Head of caudate nucleus (tissue), 42 donors: ENCODE measurements at regions of chr9 and their contacts with region 1.

Region 1: DNA sequence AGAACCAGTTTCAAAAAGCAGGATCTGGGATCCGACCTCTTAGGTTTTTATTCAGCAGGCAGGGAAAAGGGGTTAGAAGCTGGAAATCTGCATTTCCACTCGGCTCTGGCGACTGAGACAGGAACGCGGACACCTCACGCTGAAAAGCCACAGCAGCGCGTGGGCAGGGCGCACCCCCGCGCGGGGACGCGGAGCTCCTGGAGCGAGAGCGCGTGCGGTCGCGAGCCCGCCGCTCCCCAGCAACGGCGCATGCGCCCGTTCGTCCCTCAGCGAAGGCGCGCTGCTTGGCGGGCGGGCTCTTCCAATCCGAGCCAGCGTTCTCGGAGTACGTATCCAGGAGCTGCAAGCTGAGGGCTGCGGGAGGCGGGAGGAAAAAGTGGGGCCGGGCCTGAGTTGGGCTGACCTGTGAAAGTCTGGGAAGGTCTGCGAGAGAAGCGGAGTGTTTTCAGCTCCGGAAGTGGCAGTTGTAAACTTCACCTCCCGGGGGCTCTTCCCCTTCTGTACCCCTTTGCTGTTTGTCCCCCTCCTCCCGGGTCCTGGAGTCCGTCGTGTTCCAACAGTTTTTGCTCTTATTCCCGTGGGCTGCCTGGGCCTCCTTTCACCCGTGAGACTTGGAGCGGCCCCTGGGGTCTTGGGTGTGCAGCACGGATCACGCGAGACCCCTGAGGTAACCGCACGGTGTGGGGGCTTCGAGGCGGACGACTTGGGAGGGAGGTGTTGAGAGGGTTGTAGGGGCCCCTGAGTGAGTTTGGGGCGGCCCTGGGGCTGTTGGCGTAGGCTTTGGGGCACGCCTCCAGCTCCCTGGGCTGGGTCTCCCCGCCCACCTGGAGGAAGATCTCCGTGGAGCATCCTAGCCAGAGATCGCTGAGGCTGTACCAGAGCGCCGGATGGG is at the start of gene CCDC171:
- DNase-seq: peak; percentile 84 to 97 (median 93)

Region 2: DNA sequence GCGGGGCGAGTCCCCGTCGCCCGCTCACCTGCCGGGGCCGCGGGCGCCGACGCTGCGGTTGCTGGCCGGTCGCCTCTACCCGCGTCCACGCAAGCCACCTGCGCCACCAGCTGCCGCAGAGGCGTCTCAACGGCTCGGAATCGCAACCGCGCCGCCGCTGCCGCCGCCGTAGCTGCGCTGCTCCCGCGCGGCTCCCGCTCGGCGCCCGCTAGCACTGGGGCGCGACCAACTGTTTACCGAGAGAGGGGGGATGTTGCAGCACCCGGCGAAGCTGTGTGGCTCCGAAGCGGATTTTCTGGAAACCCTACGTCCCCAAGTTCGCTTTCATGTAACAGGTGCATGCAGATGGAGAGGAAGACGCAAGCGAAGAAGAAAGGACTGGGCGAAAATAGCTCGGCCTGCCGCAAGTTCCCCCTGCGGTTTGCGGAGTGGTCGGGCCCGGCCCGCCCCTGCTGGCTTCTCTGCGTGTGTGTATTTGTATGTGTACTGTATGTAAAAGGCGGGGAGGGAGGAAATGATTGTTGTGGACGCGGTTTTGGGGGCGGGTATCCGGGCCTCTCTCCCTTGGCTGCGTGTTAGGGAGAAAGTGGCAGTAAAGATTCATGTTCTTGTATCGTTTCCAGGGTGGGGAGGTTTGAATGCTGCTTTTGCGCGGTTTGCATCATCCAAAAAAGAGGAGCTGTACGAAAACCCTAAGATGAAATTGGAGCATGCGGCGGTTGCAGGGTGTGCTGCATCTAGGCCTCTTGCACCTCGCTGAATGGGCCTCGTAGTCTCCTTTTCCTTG is 41.9 kb before region 1 on chr9 and contains the start of gene PSIP1:
- intact Hi-C with region 1: loop called (anchors 2 kb)
- DNase-seq: peak; percentile 53 to 89 (median 82)

Region 3: DNA sequence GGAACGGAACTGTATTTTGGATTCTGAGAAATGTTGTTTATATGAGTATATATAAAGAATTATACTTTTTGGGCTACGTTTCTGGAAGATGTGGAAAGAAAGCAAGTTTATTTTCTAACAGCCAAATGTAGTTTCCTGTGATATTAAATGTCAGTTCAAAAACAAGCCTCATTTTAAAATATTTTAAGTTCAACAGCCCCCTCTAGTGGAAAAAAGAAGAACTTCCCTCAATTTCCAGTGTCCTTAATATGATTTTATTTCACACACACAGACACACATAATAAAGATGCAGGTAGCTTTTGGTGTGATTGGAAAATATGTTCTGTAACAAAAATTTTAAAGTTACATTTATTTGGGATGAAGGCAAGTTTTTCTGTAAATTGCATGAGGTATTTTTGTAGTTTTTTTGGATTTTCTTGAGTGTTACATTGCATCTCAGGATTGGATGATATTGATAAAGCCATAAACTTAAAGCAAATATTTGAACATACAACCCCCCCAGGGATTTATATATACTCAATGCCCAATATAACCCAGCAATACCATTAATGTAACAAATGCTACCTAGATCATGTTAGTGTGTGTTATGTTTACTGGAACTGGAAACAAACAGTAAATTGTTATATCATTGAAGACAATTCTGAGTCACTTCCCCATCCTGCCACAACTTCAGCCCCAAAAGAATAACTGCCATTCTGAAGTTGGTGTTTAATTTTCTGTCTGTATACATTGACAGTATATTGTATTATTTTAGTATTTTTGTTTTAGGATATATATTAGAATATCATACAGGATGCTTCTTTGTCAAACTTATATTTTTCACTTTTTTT is 54.0 kb after region 1 on chr9:
- intact Hi-C with region 1: loop called (anchors 5 kb)
- DNase-seq: peak in 4 of 42 donors; percentile 5 to 54 (median 24)